ENCODE measurements at regions of chr2 and their contacts with region 1.

Region 1: DNA sequence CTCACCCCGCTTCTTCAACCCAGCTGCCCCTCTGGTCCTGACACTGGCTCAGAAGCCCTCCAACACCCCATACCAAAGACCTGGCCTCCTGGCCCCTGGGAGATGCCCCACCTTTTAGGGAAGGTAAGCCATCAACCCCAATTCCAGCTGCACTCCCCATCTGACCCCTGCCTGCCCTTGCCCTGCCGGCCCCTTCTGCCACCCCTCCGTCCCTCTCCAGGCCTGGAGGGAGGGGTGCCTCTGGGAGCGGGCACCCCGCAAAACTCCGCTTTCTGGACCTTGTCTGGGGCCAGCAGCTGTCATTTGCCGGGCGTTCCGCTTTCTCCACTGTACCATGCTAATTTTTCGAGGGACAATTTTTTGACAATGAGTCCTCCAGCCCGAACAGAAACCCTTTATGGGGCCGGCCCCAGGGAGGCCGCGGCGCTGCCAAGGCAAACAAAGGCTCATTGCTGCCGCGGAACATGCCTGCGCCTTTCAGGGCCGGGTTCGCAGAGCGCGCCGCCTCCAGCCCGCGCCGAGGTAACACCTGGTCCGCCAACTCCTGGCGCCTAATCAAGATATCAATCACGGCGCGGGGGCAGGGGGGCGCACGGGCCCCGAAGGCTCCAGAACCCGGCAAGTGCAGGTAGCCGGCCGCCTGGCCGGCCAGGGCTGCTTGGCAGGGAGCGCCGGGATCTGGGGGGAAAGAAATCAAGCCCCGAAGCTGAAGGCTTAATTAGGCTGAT is 96.0 kb downstream of the INHBB start:
- DNase-seq: peak; percentile 67
- ATAC-seq: peak; percentile 64 to 75

Region 2: GRCh38 chr2:120252225-120253021 is 189.5 kb before region 1 on chr2 and contains the start of gene RALB:
- intact Hi-C with region 1: no loop called
- DNase-seq: peak; percentile 100
- ATAC-seq: peak; percentile 96
- total RNA-seq, gene RALB: 52.5 to 54.7 TPM

Region 3: GRCh38 chr2:120360307-120360855 is 81.5 kb before region 1 on chr2:
- intact Hi-C with region 1: loop called in 1 of 2 experiments (anchors 5 kb)
- DNase-seq: no peak
- ATAC-seq: peak in 1 of 2 donors; percentile 50